ENCODE measurements at regions of chr17 and their contacts with region 1.

Region 1: DNA sequence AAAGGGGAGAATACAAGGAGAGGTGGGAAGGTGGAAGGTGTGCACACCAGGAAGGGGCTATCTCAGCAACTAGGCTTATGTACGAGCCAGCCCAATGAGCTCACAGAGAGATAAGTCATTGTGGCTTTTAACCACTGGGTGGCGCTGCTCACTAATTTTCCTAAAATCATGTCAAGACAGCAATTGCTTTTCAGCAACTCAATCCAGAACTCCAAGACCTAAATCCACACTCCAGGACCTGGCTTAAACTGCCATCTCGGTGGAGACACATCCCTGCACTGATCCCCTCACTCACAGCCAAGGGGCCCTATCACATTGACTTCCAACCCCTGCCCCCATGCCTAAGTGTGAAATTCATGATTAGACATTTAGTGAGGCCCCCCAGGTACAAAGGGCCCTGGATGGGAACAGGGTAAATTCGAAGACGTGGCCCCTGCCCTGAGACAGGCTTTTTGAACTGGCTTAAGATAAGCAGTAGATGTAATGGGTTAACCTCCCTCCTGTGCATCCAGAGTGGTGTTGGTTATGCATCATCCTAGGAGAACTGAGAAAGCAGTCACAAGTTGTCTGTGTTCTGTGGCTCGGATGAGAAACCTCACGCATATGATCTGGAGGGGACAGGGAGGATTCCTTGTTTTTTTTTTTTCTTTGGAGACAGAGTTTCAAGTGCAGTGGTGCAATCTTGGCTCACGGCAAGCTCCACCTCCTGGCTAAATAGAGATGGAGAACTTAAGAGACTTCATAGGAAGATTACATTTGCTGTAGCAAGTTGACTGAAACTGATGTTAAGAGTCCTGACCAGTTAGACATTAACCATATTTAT is 11.5 kb downstream of the CCL16 start:
- DNase-seq: peak in 2 of 3 donors; percentile 59 to 93
- ATAC-seq: peak; percentile 88
- H3K4me3 ChIP-seq: no peak overlapping the region
- H3K4me1 ChIP-seq: peaks cover 12% of the 10 kb centered on the region
- CTCF ChIP-seq: peak; percentile 51

Region 2: GRCh38 chr17:34068506-34069035 is 1901.2 kb before region 1 on chr17:
- intact Hi-C with region 1: no loop called
- DNase-seq: no peak
- ATAC-seq: no peak
- H3K4me3 ChIP-seq: no peak overlapping the region
- H3K4me1 ChIP-seq: no peaks in the 10 kb centered on the region
- CTCF ChIP-seq: no peak

Region 3: GRCh38 chr17:36008998-36009665 is 39.4 kb after region 1 on chr17:
- intact Hi-C with region 1: no loop called
- DNase-seq: no peak
- ATAC-seq: no peak
- H3K4me3 ChIP-seq: no peak overlapping the region
- H3K4me1 ChIP-seq: peaks cover 8% of the 10 kb centered on the region
- CTCF ChIP-seq: no peak

Region 4: DNA sequence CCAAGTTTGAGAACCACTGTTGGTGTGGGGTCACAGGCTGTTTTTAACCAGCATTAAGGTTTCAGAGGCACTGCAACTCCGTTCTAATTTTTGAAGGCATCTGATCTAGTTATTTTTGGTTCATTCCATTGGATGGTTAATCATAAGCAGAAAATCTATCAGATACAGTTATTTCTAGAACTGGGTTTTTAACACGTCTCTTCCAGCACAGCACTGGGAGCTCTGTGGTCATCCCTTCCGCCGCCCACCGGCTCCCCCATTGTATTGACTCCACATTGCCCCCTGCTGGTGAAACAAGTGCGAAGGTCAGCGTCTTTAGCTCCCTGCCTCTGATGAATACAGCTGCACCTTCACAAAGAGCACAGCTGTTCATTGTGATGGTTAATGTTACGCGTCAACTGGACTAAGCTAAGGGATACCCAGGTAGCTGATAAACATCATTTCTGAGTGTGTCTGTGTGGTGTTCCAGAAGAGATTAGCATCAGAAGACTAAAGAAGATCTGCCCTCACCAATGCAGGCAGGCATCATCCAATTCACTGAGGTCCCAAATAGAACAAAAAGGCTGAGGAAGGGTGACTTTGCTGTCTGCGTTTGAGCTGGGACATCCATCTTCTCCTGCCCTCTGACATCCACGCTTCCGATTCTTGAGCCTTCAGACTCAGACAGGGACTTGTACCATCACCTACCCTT is 102.8 kb after region 1 on chr17:
- intact Hi-C with region 1: loop called in 1 of 2 experiments (anchors 10 kb)
- DNase-seq: peak in 2 of 3 donors; percentile 57 to 77
- ATAC-seq: peak; percentile 89
- H3K4me3 ChIP-seq: no peak overlapping the region
- H3K4me1 ChIP-seq: no peaks in the 10 kb centered on the region
- CTCF ChIP-seq: peak; percentile 30

Region 5: GRCh38 chr17:36148559-36149295 is 179.0 kb after region 1 on chr17:
- intact Hi-C with region 1: loop called in 1 of 2 experiments (anchors 10 kb)
- DNase-seq: peak; percentile 79 to 86 (median 83)
- ATAC-seq: peak; percentile 89
- H3K4me3 ChIP-seq: no peak overlapping the region
- H3K4me1 ChIP-seq: peaks cover 9% of the 10 kb centered on the region
- CTCF ChIP-seq: peak; percentile 95

Measured in mucosa of descending colon (tissue), 3 donors.